Astrocyte of the cerebellum (primary cell): ENCODE measurements at regions of chr2 and their contacts with region 1.

Region 1: DNA sequence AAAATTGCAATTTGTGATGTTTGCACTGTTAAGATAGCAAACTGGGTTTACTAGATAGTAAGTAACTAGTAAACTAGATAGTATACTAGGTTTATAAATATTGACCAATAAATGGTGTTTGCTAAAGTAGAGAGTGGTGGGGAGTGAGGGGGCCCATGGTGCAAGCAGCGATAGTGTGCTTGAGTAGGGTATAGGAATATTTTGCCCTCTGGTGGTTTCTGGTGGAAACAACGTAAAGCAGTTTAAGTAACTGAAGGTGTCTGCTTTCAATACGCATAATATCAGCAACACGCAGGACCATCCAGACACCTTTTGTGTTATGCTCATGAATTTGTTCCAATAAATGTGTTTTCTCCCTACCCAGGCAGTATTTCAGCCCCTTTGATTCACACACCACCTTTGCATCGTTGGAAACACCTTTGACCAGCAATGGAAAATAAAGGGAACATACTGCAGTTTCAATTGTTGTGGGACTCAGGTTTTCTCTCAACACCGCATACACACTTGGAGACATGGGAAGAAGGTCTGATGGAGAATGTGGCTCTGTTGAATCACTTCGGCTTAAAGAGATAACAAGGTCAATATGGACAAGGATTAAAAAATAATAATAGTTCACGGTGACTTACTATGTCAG is 16.7 kb upstream of the STAT1 start:
- DNase-seq: no peak
- H3K4me3 ChIP-seq: no peak overlapping the region
- CTCF ChIP-seq: peak; percentile 72

Region 2: GRCh38 chr2:190781604-190782198 is 248.9 kb before region 1 on chr2:
- in situ Hi-C with region 1: loop called (anchors 25 kb)
- DNase-seq: peak; percentile 63
- H3K4me3 ChIP-seq: no peak overlapping the region
- CTCF ChIP-seq: peak; percentile 57

Region 3: DNA sequence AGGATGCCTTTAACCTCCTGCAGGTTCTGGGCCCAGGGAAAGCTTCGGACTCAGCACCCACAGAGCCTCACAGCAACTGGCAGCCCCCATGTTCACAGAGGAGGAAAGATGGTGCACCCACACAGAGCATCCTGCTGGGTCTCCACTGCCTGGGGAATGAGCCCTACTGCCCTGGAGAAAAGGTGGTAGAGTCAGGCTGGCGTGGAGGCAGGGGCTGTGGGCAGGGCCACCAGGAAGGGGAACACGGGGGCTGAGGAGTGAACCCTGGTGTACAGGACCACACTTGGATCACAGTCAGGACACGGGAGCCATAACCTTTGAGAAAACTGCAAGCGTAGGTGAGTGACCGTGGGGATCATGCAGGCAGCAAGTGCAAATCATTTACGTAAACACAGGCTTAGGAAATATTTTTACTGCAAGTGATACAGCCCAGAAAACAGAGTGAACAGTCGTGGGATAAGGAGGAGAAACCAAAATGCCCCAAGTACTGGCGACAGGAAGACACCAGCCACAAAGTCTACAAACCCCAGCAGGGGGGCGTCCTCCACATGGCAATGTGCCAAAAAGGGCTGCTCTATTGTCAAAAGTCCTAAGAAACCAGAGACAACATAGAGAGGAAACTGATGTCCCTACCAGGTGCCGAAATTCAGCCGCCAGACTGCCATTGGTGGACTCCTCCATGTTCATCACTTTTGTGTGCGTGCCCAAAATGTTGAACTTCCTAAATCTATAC is 44.3 kb before region 1 on chr2:
- in situ Hi-C with region 1: no loop called
- DNase-seq: no peak
- H3K4me3 ChIP-seq: no peak overlapping the region
- CTCF ChIP-seq: no peak